Mammary epithelial cell (primary cell): ENCODE measurements at regions of chr17 and their contacts with region 1.

Region 1: GRCh38 chr17:75430159-75430974 is 24.9 kb upstream of the GRB2 start:
- DNase-seq: no peak
- H3K4me3 ChIP-seq: no peak overlapping the region
- H3K27ac ChIP-seq: no peak overlapping the region
- H3K4me1 ChIP-seq: no peaks in the 10 kb centered on the region
- H3K27me3 ChIP-seq: no peaks in the 10 kb centered on the region
- CTCF ChIP-seq: no peak

Region 2: DNA sequence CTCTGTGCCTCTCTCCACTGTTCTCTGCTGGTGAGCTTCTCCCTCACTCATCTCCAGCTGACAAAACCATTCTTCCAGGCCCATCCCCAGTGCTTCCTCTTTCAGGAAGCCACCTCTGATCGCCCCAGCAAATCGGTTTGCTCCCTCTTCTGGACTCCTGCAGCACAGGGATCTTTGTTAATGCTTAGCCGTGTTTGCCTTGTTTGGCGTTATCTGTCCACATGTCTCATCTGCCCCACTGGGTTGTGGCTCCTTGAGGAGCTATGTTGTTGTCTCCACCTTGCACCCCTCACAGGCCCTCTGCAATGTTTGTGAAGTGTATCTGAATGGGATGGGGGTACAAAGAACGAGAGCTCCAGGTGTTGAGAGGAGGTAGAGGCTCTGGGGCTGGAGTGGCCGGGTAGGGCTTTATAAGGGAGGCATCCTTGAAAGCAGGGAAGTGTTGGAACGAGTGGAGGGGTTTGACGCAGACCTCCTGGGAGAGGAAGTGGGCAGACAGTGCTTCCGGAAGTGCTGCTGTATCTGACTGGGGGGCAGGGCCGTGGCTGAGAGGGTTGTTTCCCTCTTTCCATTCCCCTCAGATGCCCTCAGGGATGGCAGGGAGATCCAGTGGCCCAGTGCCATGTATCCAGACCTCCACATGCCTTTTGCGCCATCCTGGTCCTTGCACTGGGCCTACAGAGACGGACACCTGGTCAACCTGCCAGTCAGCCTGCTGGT is 57.1 kb after region 1 on chr17:
- CTCF ChIA-PET with region 1: no interaction called
- dilution Hi-C with region 1: loop called (anchors 5 kb)
- in situ Hi-C with region 1: no loop called
- intact Hi-C with region 1: no loop called
- DNase-seq: no peak
- H3K4me3 ChIP-seq: no peak overlapping the region
- H3K27ac ChIP-seq: no peak overlapping the region
- H3K4me1 ChIP-seq: no peaks in the 10 kb centered on the region
- H3K27me3 ChIP-seq: no peaks in the 10 kb centered on the region
- CTCF ChIP-seq: no peak

Region 3: DNA sequence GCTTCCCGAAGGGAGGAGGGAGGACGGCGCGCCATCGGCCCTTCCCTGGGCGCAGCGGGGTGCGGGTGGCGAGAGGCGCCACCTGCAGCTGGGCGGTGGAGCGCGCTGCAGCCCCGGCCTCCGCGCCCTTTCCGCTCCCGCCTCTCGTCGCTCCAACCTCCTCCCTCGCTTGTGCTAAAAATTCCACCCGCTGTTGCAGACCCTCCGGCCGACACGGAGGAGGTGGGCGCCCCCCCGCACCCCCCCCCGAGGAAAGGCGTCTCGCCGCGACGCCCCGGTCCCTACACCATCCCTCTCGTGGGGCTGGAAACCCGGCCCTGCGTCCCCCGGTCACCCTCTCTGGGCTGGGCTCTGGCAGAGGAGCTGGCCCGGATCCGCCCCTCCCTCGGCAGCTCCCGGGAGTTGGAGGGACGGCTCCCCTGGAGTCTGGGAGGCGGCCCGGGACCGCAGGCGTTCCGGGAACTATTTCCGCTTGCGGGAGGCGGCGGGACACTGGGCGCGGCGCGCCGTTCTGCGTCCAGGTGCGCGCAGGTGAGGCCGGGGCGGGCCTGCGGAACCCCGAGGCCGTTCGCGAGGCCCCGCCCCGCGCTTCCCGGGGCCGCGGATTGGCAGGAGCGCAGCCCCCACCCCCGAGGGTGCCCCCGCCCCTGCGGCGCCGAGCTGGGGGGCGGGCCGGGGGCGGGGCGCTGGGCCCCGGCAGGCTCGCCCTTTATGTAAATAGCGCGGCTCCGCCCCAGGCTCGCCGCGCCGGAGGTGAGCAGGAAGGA is 94.8 kb after region 1 on chr17 and contains the start of gene LLGL2:
- CTCF ChIA-PET with region 1: no interaction called
- dilution Hi-C with region 1: loop called (anchors 5 kb)
- in situ Hi-C with region 1: no loop called
- intact Hi-C with region 1: loop called (anchors 1 kb)
- DNase-seq: peak; percentile 88
- H3K4me3 ChIP-seq: peak within 1 kb of the TSS; percentile 70 to 96 (median 84)
- H3K27ac ChIP-seq: peak within 1 kb of the TSS; percentile 29
- H3K4me1 ChIP-seq: peaks cover 15% of the 10 kb centered on the region
- H3K27me3 ChIP-seq: no peaks in the 10 kb centered on the region
- CTCF ChIP-seq: peak in 1 of 2 donors; percentile 58
- total RNA-seq, gene LLGL2: 22.3 to 25.7 TPM

Region 4: DNA sequence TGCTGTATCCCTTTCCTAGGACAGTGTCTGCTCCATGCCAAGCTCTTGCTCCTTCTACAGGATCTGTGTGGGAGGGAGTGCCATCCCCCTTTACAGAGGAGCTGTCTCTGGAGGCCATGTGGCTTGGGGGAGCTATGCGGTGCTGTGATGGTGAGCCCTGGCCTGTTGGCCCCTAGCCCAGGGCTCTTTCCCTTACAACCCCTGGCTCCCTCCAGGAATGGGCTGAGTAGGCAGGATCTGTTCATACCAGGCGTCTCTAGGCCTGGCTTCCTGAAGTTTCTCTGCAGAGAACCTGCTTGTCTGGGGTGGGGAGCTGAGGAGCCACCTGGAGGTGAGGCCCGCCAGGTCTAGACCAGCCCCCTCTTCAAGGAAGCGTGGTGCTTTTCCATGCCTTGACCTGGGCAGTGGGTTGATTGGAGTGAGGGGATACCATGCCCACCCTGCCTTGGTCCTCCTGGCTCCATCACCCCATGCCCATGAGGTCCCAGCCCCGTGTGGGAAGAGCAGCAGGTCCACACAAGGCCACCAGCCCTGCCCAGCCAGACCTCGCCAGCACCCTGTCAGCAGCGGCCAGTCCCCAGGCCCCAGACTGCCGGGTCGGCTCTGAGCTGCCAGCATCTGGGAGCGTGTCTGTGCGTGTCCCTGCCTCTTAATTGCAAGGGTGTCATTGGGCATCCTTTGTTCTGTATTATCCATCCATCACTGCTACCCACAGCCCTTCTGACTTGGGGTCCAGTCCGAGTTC is 109.8 kb after region 1 on chr17:
- CTCF ChIA-PET with region 1: no interaction called
- dilution Hi-C with region 1: no loop called
- in situ Hi-C with region 1: no loop called
- intact Hi-C with region 1: no loop called
- DNase-seq: no peak
- H3K4me3 ChIP-seq: no peak overlapping the region
- H3K27ac ChIP-seq: no peak overlapping the region
- H3K4me1 ChIP-seq: peaks cover 10% of the 10 kb centered on the region
- H3K27me3 ChIP-seq: no peaks in the 10 kb centered on the region
- CTCF ChIP-seq: no peak

Region 5: GRCh38 chr17:75589012-75589918 is 158.9 kb after region 1 on chr17:
- CTCF ChIA-PET with region 1: no interaction called
- dilution Hi-C with region 1: no loop called
- in situ Hi-C with region 1: loop called in 1 of 2 experiments (anchors 10 kb)
- intact Hi-C with region 1: loop called (anchors 1 kb)
- DNase-seq: peak; percentile 64
- H3K4me3 ChIP-seq: peak overlapping the region; percentile 41 to 65 (median 46)
- H3K27ac ChIP-seq: no peak overlapping the region
- H3K4me1 ChIP-seq: peaks cover 6% of the 10 kb centered on the region
- H3K27me3 ChIP-seq: peaks cover 4% of the 10 kb centered on the region
- CTCF ChIP-seq: peak in 1 of 2 donors; percentile 30

Region 6: DNA sequence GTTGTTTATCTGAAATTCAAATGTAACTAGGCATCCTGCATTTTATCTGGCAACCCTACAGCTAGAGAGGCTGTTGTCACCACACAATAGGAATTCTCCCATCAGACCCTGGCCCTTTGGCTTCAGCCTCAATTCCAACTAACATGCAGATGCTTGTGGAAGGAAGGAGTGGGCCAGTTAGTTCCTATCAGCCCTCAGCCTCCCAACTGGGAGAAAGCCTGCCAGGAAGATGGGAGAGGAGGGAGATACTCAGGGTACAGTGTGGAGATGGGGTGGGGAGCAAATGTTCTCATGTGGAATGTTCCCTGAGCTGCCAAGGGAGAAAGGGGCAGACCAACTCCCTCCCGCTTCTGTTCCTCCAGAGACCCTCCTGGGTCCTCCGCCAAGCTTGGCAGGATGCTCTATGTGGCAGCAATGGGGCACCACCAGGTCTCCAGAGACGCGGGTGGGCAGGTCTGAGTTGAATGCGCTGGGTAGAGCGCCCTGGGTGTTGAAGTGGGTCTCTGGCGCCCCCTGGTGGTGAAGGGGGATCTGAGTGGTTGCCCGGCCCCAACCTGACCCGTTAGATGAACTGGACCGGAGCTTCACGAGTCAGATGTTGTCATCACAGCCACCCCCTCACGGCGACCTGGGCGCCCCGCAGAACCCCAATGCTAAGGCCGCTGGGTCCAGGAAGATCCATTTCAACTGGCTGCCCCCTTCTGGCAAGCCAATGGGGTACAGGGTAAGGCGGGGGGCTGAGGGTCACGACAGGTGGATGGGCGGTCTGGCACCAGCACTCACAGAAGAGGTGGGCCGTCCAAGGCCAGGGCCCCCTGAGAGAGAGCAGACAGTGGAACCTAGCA is 319.4 kb after region 1 on chr17:
- CTCF ChIA-PET with region 1: no interaction called
- dilution Hi-C with region 1: no loop called
- in situ Hi-C with region 1: no loop called
- intact Hi-C with region 1: loop called (anchors 5 kb)
- DNase-seq: no peak
- H3K4me3 ChIP-seq: no peak overlapping the region
- H3K27ac ChIP-seq: no peak overlapping the region
- H3K4me1 ChIP-seq: peaks cover 3% of the 10 kb centered on the region
- H3K27me3 ChIP-seq: no peaks in the 10 kb centered on the region
- CTCF ChIP-seq: peak; percentile 52 to 77